Heart left ventricle (tissue), 16 donors: ENCODE measurements at regions of chr20 and their contacts with region 1.

Region 1: GRCh38 chr20:47272893-47273590 is 83.5 kb downstream of the ZMYND8 start:
- DNase-seq: peak in 2 of 5 donors; percentile 49 to 62
- ATAC-seq: peak; percentile 45 to 75 (median 70)
- H3K4me3 ChIP-seq: no peak overlapping the region
- H3K27ac ChIP-seq: peak overlapping the region in 9 of 12 donors; percentile 14 to 88 (median 72)
- H3K4me1 ChIP-seq: peaks cover 13 to 52% (median 41%) of the 10 kb centered on the region in 12 donors
- H3K27me3 ChIP-seq: no peaks in the 10 kb centered on the region
- CTCF ChIP-seq: peak; percentile 79 to 94 (median 90)
- POLR2A ChIP-seq: no peak

Region 2: DNA sequence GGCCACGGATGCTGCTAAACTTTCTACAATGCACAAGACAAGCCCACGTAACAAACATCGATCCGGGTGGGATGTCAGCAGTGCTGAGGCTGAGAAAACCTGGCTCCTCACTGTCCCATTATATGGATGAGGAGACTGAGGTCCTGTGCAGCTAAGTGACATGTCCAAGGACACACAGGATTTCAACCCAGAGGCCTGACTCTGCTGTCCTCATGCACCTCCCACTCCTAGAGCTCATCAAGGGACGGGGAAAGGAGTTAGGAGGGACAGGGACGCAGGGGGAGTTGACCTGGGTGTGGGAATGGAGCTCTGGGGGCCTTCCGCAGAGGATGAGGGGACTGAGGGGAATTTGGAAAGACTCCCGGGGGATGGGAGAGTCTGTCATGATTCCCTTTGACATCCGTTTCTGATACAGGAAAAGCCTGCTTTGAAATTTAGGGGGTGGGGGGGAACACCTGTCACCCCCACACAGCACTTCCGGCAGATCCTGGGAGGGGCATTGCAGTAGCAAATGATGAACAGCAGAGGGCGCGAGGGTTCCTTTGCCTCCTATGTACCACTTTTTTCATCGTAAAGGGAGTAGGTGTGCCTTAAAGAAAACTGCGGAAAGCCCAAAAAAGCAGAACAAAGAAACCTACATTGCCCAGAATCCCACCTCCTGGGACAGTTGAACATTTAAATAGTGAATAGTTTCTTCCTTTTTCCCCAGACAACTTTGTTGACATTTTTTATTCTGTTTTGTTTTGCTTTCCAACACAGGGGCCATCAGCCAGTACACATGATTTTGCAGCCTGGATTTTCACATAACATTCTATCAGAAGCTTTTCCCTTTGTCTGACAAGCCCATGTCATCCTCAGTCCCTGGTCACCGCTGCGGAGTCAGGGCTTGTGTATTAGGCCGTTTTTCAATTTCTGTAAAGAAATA is 515.0 kb before region 1 on chr20:
- intact Hi-C with region 1: loop called in 4 of 10 experiments (anchors 10 kb)
- DNase-seq: peak in 4 of 5 donors; percentile 10 to 40 (median 38)
- ATAC-seq: peak in 3 of 4 donors; percentile 42 to 54 (median 51)
- H3K4me3 ChIP-seq: no peak overlapping the region
- H3K27ac ChIP-seq: no peak overlapping the region
- H3K4me1 ChIP-seq: peaks cover 0 to under 1% (median 0%) of the 10 kb centered on the region in 12 donors
- H3K27me3 ChIP-seq: peaks cover 0 to 7% (median 0%) of the 10 kb centered on the region in 9 donors
- CTCF ChIP-seq: peak; percentile 82 to 95 (median 90)
- POLR2A ChIP-seq: no peak

Region 3: GRCh38 chr20:47205577-47206498 is 67.2 kb before region 1 on chr20:
- intact Hi-C with region 1: loop called in 3 of 10 experiments (anchors 5 kb)
- DNase-seq: peak; percentile 43 to 84 (median 69)
- ATAC-seq: peak; percentile 40 to 83 (median 76)
- H3K4me3 ChIP-seq: no peak overlapping the region
- H3K27ac ChIP-seq: no peak overlapping the region
- H3K4me1 ChIP-seq: peaks cover 0 to 9% (median 3%) of the 10 kb centered on the region in 12 donors
- H3K27me3 ChIP-seq: no peaks in the 10 kb centered on the region
- CTCF ChIP-seq: peak; percentile 22 to 83 (median 58)
- POLR2A ChIP-seq: no peak

Region 4: GRCh38 chr20:47312020-47312662 is 39.1 kb after region 1 on chr20:
- intact Hi-C with region 1: loop called in 4 of 10 experiments (anchors 5 kb)
- DNase-seq: no peak
- ATAC-seq: no peak
- H3K4me3 ChIP-seq: no peak overlapping the region
- H3K27ac ChIP-seq: peak overlapping the region in 9 of 12 donors; percentile 0 to 99 (median 47)
- H3K4me1 ChIP-seq: peaks cover 12 to 72% (median 40%) of the 10 kb centered on the region in 12 donors
- H3K27me3 ChIP-seq: no peaks in the 10 kb centered on the region
- CTCF ChIP-seq: no peak
- POLR2A ChIP-seq: no peak

Region 5: GRCh38 chr20:47356526-47357295 is 83.7 kb after region 1 on chr20 and contains the start of gene ZMYND8:
- intact Hi-C with region 1: loop called in 6 of 10 experiments (anchors 1 to 5 kb)
- DNase-seq: peak; percentile 86 to 91 (median 89)
- ATAC-seq: peak; percentile 40 to 63 (median 57)
- H3K4me3 ChIP-seq: peak within 1 kb of the TSS in 7 of 12 donors; percentile 4 to 47 (median 25)
- H3K27ac ChIP-seq: peak within 1 kb of the TSS; percentile 94 to 99 (median 98)
- H3K4me1 ChIP-seq: peaks cover 35 to 100% (median 98%) of the 10 kb centered on the region in 12 donors
- H3K27me3 ChIP-seq: no peaks in the 10 kb centered on the region
- CTCF ChIP-seq: no peak
- POLR2A ChIP-seq: peak in 1 of 2 donors; percentile 63
- total RNA-seq, gene ZMYND8: 21.7 to 46.4 (median 28.9) TPM

Region 6: DNA sequence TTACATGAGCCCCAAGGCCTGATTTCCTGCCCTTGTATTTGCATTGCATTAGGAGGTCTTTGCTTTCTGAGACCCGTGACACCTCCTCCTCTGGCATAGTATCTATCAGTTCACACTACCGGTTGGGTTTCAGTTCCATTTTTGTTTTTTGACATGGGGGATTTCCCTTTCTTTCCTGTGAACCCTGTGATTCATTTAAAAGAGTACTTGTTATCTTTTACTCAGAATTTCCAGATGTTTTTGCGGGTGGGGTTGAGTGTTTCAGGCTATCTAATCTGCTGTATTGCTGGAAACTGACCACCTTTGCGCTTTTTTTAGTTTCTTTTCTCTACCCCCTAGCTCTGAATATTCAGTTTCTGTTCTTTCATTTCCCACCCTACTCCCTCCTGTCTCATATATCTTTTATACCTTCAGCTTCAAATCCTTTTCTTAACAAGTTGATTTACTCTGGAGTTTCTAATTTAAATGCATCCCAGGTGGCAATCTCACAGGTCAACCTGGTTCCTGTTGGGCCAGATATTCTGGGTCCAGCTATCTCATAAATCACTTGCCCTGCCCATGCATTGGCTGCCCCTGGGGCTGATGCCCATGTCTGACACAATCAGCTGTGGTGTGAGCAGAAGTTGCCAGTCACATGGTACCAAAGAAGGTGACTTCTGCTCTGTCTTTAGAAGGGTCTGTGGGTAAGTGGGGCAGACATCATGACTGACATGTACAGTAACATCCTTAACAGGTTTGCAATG is 214.3 kb after region 1 on chr20:
- intact Hi-C with region 1: loop called in 4 of 10 experiments (anchors 5 to 10 kb)
- DNase-seq: no peak
- ATAC-seq: peak in 3 of 4 donors; percentile 53 to 68 (median 53)
- H3K4me3 ChIP-seq: no peak overlapping the region
- H3K27ac ChIP-seq: peak overlapping the region in 7 of 12 donors; percentile 4 to 77 (median 41)
- H3K4me1 ChIP-seq: peaks cover 0 to 49% (median 8%) of the 10 kb centered on the region in 12 donors
- H3K27me3 ChIP-seq: no peaks in the 10 kb centered on the region
- CTCF ChIP-seq: no peak
- POLR2A ChIP-seq: no peak

Region 7: DNA sequence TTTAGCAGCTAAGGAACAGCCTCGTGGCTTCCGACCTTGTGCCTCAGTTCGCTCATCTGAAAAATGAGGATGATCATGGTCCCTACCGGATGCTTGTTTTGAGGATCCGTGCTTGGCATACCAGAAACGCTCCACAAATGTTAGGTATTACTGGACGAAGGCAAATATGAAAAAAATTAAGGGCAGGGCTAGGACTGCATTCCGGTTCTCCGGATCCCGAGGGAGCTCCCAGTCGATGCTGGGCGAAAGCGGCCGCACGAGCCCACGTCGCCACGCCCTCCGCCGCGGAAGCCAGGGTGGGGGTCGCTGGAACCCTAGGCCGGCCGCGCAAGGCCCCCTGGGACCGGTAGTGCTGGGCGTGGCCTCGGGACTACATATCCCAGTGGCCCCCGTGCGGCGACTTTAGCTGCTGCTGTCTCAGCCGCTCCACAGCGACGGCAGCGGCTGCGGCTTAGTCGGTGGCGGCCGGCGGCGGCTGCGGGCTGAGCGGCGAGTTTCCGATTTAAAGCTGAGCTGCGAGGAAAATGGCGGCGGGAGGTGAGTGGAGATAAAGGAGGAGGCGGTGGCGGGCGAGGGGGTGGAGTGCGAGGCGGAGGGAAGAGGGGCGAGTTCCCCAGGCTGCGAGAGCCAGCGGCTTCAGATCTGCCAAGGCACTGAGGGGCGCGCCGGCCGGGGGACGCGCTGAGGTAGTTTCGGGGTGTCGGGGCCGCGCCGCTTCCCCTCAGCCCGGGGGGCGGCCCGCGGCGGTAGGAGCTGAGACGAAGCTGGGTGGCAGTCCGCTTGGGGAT is 228.6 kb after region 1 on chr20 and contains the start of gene NCOA3:
- intact Hi-C with region 1: loop called in 4 of 10 experiments (anchors 10 kb)
- DNase-seq: peak; percentile 96 to 99 (median 98)
- ATAC-seq: peak; percentile 96 to 99 (median 99)
- H3K4me3 ChIP-seq: peak within 1 kb of the TSS; percentile 76 to 99 (median 92)
- H3K27ac ChIP-seq: peak within 1 kb of the TSS; percentile 91 to 98 (median 95)
- H3K4me1 ChIP-seq: peaks cover 0 to 46% (median 23%) of the 10 kb centered on the region in 12 donors
- H3K27me3 ChIP-seq: no peaks in the 10 kb centered on the region
- CTCF ChIP-seq: peak; percentile 41 to 68 (median 50)
- POLR2A ChIP-seq: peak; percentile 24 to 98
- total RNA-seq, gene NCOA3: 19.4 to 39.3 (median 26.6) TPM